CD14-positive monocyte (primary cell): ENCODE measurements at regions of chr10 and their contacts with region 1.

Region 1: GRCh38 chr10:123582084-123582989 is 83.8 kb upstream of the GPR26 start:
- DNase-seq: peak; percentile 34 to 50 (median 47)
- H3K4me3 ChIP-seq: no peak overlapping the region
- H3K4me3 Mint-ChIP-seq: no peak overlapping the region
- H3K27ac ChIP-seq: no peak overlapping the region
- H3K27ac Mint-ChIP-seq: no peak overlapping the region
- H3K4me1 ChIP-seq: no peaks in the 10 kb centered on the region
- H3K4me1 Mint-ChIP-seq: no peaks in the 10 kb centered on the region
- H3K27me3 ChIP-seq: peaks cover 3 to 25% of the 10 kb centered on the region in 2 donors
- H3K27me3 Mint-ChIP-seq: peaks cover 28 to 45% (median 40%) of the 10 kb centered on the region in 3 donors
- CTCF ChIP-seq: peak; percentile 85

Region 2: DNA sequence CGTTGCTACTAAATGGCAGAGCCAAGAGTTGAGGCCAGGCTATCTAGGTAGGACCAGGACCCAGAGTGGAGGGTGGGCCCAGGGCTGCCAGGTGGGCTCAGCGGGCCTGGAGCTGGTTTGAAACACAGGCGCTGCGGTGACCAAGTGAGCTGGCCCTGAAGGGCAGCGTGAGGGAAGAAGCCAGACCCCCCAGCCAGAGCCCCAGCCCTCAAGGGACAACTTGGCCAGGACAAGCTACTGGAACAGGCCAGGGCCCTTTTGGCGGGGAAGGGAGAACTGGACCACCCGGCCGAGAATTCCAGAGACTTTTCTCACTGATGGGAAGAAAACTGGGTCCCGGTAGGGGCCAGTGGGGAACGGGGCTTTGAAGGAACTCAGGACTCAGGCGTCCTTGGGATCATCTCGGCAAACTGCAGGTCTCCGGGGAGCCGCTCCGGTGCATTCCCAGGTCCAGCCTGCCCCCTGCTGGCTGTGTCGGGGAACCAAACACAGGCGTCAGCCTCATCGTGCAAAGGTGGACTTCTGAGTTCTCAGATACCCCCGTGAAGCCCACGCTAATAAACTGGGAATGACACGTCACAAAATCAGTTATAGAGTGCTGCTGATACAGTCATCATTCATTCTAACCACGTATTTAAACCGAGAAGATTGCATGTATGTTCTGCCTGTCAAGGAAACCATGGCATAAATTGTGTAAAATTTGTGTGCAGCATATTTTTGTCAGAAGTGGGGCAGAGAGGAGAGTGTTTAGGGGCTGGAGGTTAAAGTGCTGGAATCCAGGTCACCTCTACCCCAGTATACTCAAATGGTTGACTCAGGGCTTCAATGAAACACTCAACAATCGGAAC is 385.3 kb after region 1 on chr10:
- intact Hi-C with region 1: loop called (anchors 2 to 5 kb)
- DNase-seq: peak; percentile 13 to 44 (median 31)
- H3K4me3 ChIP-seq: no peak overlapping the region
- H3K4me3 Mint-ChIP-seq: no peak overlapping the region
- H3K27ac ChIP-seq: no peak overlapping the region
- H3K27ac Mint-ChIP-seq: no peak overlapping the region
- H3K4me1 ChIP-seq: no peaks in the 10 kb centered on the region
- H3K4me1 Mint-ChIP-seq: no peaks in the 10 kb centered on the region
- H3K27me3 ChIP-seq: peaks cover 8 to 43% of the 10 kb centered on the region in 2 donors
- H3K27me3 Mint-ChIP-seq: peaks cover 40 to 79% (median 61%) of the 10 kb centered on the region in 3 donors
- CTCF ChIP-seq: peak; percentile 91

Region 3: DNA sequence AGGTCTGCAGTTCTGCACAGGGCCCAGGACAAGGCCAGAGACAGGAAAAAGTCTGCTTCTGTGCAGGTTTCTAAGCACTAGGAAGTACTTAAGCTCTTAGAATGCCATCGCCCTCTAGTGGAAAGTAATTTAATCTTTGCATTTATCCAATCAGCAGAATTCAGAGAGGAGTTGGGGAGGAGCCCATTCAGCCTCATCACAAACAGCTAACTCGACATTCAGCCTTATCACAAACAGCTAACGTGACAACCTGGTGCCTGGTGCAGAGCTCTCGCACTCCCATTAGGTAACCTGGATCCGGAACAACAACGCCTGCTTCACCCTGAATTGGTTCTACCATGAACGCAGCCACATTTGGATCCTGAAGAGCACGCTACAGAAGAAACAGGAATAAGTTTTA is 821.2 kb after region 1 on chr10:
- intact Hi-C with region 1: loop called (anchors 5 kb)
- DNase-seq: peak; percentile 63 to 79 (median 65)
- H3K4me3 ChIP-seq: no peak overlapping the region
- H3K4me3 Mint-ChIP-seq: no peak overlapping the region
- H3K27ac ChIP-seq: no peak overlapping the region
- H3K27ac Mint-ChIP-seq: peak overlapping the region in 1 of 7 donors; percentile 52
- H3K4me1 ChIP-seq: no peaks in the 10 kb centered on the region
- H3K4me1 Mint-ChIP-seq: peaks cover 5% of the 10 kb centered on the region
- H3K27me3 ChIP-seq: no peaks in the 10 kb centered on the region
- H3K27me3 Mint-ChIP-seq: peaks cover 0 to 2% (median 0%) of the 10 kb centered on the region in 3 donors
- CTCF ChIP-seq: peak; percentile 58